ENCODE measurements at regions of chr20 and their contacts with region 1.

Region 1: DNA sequence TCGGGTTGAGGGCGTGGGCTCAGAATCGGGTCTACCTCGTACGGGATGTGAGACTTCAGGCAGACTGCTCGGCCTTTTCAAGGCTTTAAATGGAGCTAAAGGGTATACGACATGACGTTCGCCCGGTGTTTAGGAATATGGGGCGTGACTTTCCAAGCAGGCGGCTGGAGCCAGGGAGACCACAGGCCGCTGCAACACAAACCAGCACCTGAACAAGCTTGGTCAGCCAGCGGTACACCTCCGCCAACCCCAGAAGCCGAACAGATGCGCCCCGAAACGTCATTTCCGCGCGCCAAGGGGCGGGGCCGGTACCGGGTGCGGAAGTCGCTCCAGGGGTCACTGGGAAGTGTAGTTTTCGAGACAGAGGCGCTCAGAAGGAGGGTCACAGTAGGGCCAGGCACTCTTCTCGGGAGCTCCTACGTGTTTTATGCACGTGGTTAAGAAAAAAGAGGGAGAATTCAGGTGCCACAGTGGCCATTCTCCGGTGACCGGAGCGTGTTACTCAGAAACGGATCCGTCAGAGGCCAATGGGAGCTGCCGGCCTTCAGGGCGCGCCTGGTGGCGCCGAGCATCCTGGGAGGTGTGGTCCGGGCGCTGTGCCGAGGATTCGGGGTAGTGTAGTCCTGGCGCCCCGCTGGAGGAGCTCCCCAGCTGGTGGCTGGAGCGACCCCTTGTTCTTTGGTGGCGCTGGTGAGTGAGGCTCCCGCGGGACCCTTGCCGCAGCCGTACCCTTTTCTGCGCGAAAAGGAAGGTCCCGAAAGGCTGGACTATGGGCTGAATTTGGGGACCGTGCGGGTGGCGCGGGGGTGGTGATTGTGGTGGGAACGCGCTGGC is at the start of gene ZNF133:
- DNase-seq: peak; percentile 93 to 95
- ATAC-seq: peak; percentile 99
- H3K4me3 ChIP-seq: peak within 1 kb of the TSS; percentile 75 to 100 (median 92)
- H3K27ac ChIP-seq: peak within 1 kb of the TSS; percentile 84 to 98 (median 96)
- H3K4me1 ChIP-seq: peaks cover 10 to 13% of the 10 kb centered on the region in 2 donors
- H3K27me3 ChIP-seq: peaks cover 0 to 18% (median 0%) of the 10 kb centered on the region in 3 donors
- CTCF ChIP-seq: no peak
- POLR2A ChIP-seq: peak; percentile 59 to 66
- total RNA-seq, gene ZNF133: 6.9 to 15.8 (median 11.0) TPM

Region 2: GRCh38 chr20:18137412-18138265 is 150.5 kb before region 1 on chr20 and contains the starts of genes KAT14 and PET117:
- in situ Hi-C with region 1: loop called in 2 of 4 experiments (anchors 5 to 10 kb)
- intact Hi-C with region 1: loop called (anchors 2 kb)
- DNase-seq: peak; percentile 68 to 79
- ATAC-seq: peak; percentile 95 to 97
- H3K4me3 ChIP-seq: peak within 1 kb of the TSS; percentile 72 to 89 (median 84)
- H3K27ac ChIP-seq: peak within 1 kb of the TSS; percentile 83 to 96 (median 94)
- H3K4me1 ChIP-seq: peaks cover 22 to 26% of the 10 kb centered on the region in 2 donors
- H3K27me3 ChIP-seq: no peaks in the 10 kb centered on the region
- CTCF ChIP-seq: peak in 2 of 5 experiments; percentile 46 to 58
- POLR2A ChIP-seq: peak; percentile 52 to 64
- total RNA-seq, gene KAT14: 12.6 to 29.7 (median 19.8) TPM
- total RNA-seq, gene PET117: 14.4 to 28.2 (median 16.7) TPM

Region 3: GRCh38 chr20:18224968-18225568 is 63.1 kb before region 1 on chr20:
- in situ Hi-C with region 1: no loop called
- intact Hi-C with region 1: no loop called
- DNase-seq: peak; percentile 8 to 28
- ATAC-seq: peak; percentile 36 to 41
- H3K4me3 ChIP-seq: no peak overlapping the region
- H3K27ac ChIP-seq: peak overlapping the region in 1 of 4 donors; percentile 17
- H3K4me1 ChIP-seq: peaks cover 0 to 14% of the 10 kb centered on the region in 2 donors
- H3K27me3 ChIP-seq: no peaks in the 10 kb centered on the region
- CTCF ChIP-seq: no peak
- POLR2A ChIP-seq: no peak

Region 4: DNA sequence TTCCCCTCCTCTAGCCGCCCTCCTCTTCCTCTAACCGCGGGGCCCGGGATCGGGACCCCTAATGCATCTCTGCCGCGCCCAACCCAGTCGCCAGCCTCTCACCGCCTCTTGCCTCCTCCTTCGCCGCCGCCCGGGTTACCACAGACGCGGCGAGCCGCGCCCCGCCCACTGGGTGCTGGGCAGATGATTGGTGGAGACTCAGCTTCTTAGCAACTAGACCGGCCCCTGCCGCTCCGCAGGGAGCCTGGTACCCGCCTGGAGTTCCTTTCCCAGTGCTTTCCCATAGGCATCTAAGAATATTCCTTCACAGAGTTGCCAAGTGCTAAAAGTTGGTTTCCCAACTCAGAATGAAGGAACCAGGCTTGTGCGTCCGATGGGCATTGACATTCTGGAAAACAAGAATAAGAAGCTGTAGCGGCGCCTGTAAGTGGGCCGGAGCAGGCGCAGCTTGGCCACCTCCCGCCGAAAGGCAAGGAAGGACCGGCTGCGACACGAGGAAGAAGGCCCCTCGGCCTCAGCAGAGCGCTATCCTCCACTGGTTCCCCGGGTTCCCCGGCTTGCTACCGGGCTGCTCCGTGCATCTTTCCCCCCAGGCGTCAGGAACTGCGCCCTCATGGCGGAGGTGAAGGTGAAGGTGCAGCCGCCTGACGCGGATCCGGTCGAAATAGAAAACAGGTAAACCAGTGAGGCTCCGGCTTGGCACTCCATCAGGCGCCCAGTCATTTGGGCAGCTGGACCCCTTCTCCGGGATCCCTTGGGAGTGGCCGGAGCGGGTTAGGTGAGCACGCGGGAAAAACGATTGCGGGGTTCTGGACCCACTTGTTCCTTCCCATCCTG is 179.0 kb after region 1 on chr20 and contains the starts of genes DZANK1 and POLR3F:
- in situ Hi-C with region 1: loop called in 1 of 4 experiments (anchors 25 kb)
- intact Hi-C with region 1: loop called (anchors 1 kb)
- DNase-seq: peak; percentile 83 to 94
- ATAC-seq: peak; percentile 99 to 100
- H3K4me3 ChIP-seq: peak within 1 kb of the TSS; percentile 75 to 98 (median 91)
- H3K27ac ChIP-seq: peak within 1 kb of the TSS; percentile 77 to 93 (median 85)
- H3K4me1 ChIP-seq: peaks cover 19 to 21% of the 10 kb centered on the region in 2 donors
- H3K27me3 ChIP-seq: no peaks in the 10 kb centered on the region
- CTCF ChIP-seq: no peak
- POLR2A ChIP-seq: peak in 1 of 2 donors; percentile 37
- total RNA-seq, gene DZANK1: 0.18 to 1.0 (median 0.62) TPM
- total RNA-seq, gene POLR3F: 6.0 to 8.7 (median 6.8) TPM

Region 5: GRCh38 chr20:18566892-18567742 is 279.0 kb after region 1 on chr20 and contains the start of gene SMIM26:
- in situ Hi-C with region 1: no loop called
- intact Hi-C with region 1: loop called (anchors 5 kb)
- DNase-seq: peak; percentile 88
- ATAC-seq: peak; percentile 97 to 99
- H3K4me3 ChIP-seq: peak within 1 kb of the TSS; percentile 61 to 85 (median 78)
- H3K27ac ChIP-seq: peak within 1 kb of the TSS; percentile 82 to 90 (median 86)
- H3K4me1 ChIP-seq: peaks cover 13 to 20% of the 10 kb centered on the region in 2 donors
- H3K27me3 ChIP-seq: no peaks in the 10 kb centered on the region
- CTCF ChIP-seq: no peak
- POLR2A ChIP-seq: peak in 1 of 2 donors; percentile 45
- total RNA-seq, gene SMIM26: 203 to 374 (median 286) TPM

Region 6: GRCh38 chr20:18587665-18588573 is 299.8 kb after region 1 on chr20 and contains the start of gene DTD1:
- in situ Hi-C with region 1: no loop called
- intact Hi-C with region 1: loop called (anchors 5 kb)
- DNase-seq: peak; percentile 84 to 90
- ATAC-seq: peak; percentile 94 to 95
- H3K4me3 ChIP-seq: peak within 1 kb of the TSS; percentile 63 to 83 (median 73)
- H3K27ac ChIP-seq: peak within 1 kb of the TSS; percentile 45 to 76 (median 68)
- H3K4me1 ChIP-seq: peaks cover 8 to 12% of the 10 kb centered on the region in 2 donors
- H3K27me3 ChIP-seq: no peaks in the 10 kb centered on the region
- CTCF ChIP-seq: peak; percentile 47 to 87 (median 72)
- POLR2A ChIP-seq: peak; percentile 44 to 53
- total RNA-seq, gene DTD1: 18.0 to 33.0 (median 26.5) TPM

Region 7: GRCh38 chr20:18793625-18794427 is 505.7 kb after region 1 on chr20:
- in situ Hi-C with region 1: loop called in 3 of 4 experiments (anchors 25 kb)
- intact Hi-C with region 1: no loop called
- DNase-seq: peak; percentile 82 to 88
- ATAC-seq: peak; percentile 99 to 100
- H3K4me3 ChIP-seq: peak overlapping the region; percentile 82 to 87 (median 85)
- H3K27ac ChIP-seq: peak overlapping the region; percentile 91 to 96 (median 92)
- H3K4me1 ChIP-seq: peaks cover 17 to 18% of the 10 kb centered on the region in 2 donors
- H3K27me3 ChIP-seq: no peaks in the 10 kb centered on the region
- CTCF ChIP-seq: peak in 1 of 5 experiments; percentile 17
- POLR2A ChIP-seq: peak; percentile 58 to 66

Measured in gastrocnemius medialis (tissue), 4 donors.